Upper lobe of right lung (tissue), 1 donor: ENCODE measurements at regions of chr5 and their contacts with region 1.

Region 1: DNA sequence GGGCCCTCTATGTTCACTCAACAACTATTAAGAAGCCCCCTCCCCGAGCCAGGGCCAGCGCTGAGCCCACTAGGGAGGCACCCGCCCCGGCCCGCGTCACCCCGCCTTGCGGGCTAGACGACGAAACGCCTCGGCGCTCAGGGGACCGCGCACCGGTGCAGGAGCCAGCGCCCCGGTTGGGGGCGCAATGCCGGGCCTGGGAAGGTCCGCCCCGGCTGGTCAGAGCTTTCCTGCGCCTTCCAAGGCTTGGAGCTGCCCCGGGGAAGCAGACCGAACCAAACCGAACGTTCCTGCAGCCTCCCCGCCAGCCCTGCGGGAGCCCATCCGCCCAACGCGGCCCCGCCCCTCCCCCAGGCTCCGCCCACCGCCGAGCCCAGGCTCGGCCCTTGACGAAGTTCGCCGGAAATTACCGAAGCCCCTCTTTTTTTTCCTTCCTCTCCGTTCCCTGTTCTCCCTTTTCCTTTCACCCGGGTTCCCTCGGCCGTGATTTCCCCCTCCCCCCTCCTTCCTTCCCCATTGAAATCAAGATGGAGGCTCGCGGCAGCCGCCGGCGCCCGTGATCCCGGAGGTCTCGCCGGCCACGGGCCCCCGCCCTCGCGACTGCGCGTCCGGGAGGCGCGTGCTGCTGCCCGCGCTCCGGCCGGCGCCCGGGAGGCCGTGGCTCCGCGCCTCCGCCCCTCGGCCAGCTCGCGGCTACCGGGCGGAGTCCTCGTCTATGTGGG is at the start of gene TRIO:
- DNase-seq: peak; percentile 94
- ATAC-seq: peak; percentile 87
- H3K4me3 ChIP-seq: peak within 1 kb of the TSS; percentile 79
- H3K27ac ChIP-seq: peak within 1 kb of the TSS; percentile 88
- H3K4me1 ChIP-seq: peaks cover 35% of the 10 kb centered on the region
- H3K27me3 ChIP-seq: no peaks in the 10 kb centered on the region
- CTCF ChIP-seq: peak; percentile 55
- total RNA-seq, gene TRIO: 148 TPM

Region 2: DNA sequence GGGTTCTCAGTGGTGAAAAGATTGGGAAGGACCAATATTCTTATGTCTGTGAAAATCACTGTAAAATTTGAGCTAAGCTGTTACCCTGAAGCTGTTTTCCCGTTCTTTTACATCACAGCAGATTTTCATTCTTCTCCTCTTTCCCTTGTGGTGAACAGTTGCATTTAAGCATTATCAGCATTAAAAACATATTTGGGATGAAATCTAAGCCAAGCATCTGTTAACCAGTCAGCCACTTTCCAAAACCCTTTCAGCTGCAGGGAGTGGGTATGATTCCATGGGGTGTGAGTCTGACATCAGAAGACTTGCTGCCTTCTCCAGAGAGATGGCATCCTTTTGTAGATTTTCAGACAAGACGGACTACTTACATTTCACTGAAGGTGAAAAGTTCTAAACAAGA is 97.4 kb after region 1 on chr5:
- intact Hi-C with region 1: loop called (anchors 10 kb)
- DNase-seq: no peak
- ATAC-seq: no peak
- H3K4me3 ChIP-seq: no peak overlapping the region
- H3K27ac ChIP-seq: no peak overlapping the region
- H3K4me1 ChIP-seq: peaks cover 6% of the 10 kb centered on the region
- H3K27me3 ChIP-seq: no peaks in the 10 kb centered on the region
- CTCF ChIP-seq: no peak